Panc1 (cell line): ENCODE measurements at regions of chr5 and their contacts with region 1.

Region 1: GRCh38 chr5:37103302-37103701 is 145.9 kb downstream of the CPLANE1 start:
- DNase-seq: no peak
- ATAC-seq: no peak
- H3K4me3 ChIP-seq: no peak overlapping the region
- H3K27ac ChIP-seq: no peak overlapping the region
- H3K4me1 ChIP-seq: no peaks in the 10 kb centered on the region
- H3K27me3 ChIP-seq: no peaks in the 10 kb centered on the region
- CTCF ChIP-seq: no peak

Region 2: GRCh38 chr5:36820900-36821299 is 282.4 kb before region 1 on chr5:
- CTCF ChIA-PET with region 1: no interaction called
- POLR2A ChIA-PET with region 1: interaction called, 16 read pairs
- in situ Hi-C with region 1: no loop called
- intact Hi-C with region 1: no loop called
- DNase-seq: no peak
- ATAC-seq: no peak
- H3K4me3 ChIP-seq: no peak overlapping the region
- H3K27ac ChIP-seq: no peak overlapping the region
- H3K4me1 ChIP-seq: no peaks in the 10 kb centered on the region
- H3K27me3 ChIP-seq: peaks cover 7% of the 10 kb centered on the region; the same call in 1 of the 2 replicates
- CTCF ChIP-seq: no peak

Region 3: DNA sequence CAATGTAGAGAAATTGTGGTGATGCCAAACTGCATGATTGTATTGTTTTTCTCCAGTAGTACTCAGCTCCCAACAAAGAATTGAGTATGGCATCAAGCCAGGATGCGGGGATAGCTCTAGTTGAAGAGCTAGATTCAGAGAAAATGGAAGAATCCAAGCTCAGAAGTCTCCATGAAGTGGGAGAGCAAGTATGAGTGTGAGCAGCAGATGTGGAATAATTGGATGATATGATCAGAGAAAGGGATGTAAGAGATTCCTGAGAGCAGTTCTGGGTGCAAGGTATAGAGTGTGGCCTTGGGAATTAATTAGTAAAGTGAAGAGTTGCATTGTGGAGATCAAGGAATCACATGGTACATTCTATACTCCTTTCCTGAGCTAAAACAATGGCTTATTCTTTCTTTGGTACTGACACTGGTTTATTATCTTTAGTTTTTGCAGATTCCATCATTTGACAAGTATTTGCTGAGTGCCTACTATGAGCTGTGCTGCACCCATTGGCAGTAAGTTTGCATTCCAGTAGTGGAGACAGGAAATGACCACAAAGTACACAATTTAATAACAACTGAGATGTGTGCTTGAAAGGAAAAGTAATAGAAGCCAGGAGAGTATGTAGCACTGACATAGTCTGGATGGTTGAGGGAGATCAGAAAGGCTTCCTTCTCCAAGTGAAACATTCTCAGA is 31.3 kb before region 1 on chr5:
- CTCF ChIA-PET with region 1: no interaction called
- POLR2A ChIA-PET with region 1: no interaction called
- in situ Hi-C with region 1: no loop called
- intact Hi-C with region 1: no loop called
- DNase-seq: no peak
- ATAC-seq: peak; percentile 64
- H3K4me3 ChIP-seq: no peak overlapping the region
- H3K27ac ChIP-seq: no peak overlapping the region
- H3K4me1 ChIP-seq: no peaks in the 10 kb centered on the region
- H3K27me3 ChIP-seq: no peaks in the 10 kb centered on the region
- CTCF ChIP-seq: no peak

Region 4: DNA sequence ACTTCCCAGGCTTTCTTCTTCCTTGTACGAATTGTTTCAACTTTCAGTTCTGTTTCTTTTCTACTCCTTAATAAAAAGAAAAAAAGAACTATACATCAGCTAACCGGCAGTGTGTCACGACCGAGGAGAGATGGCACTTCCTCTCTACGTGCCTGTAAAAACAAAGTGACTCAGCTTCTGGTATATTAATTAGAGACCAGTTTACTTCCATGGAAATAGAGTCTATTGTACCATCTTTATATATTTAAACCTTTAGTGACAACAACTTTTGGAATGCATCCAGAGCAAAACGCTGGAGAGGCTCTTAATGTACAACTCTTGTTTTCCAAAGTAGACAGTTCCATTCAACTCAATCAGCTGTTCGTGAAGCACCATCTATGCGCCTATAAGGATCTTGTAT is 1547.6 kb after region 1 on chr5:
- CTCF ChIA-PET with region 1: no interaction called
- POLR2A ChIA-PET with region 1: no interaction called
- in situ Hi-C with region 1: no loop called
- intact Hi-C with region 1: no loop called
- DNase-seq: no peak
- ATAC-seq: peak; percentile 78
- H3K4me3 ChIP-seq: peak overlapping the region; percentile 10 to 54
- H3K27ac ChIP-seq: peak overlapping the region; percentile 49; the same call in 1 of the 2 replicates
- H3K4me1 ChIP-seq: 0 out of 2 replicates have a peak, but pooled peaks cover 3% of the 10 kb centered on the region
- H3K27me3 ChIP-seq: no peaks in the 10 kb centered on the region
- CTCF ChIP-seq: no peak